ENCODE measurements at regions of chr5 and their contacts with region 1.

Region 1: GRCh38 chr5:54743997-54744788 is 226.6 kb downstream of the SNX18 start:
- DNase-seq: peak; percentile 96
- H3K4me3 ChIP-seq: 0 out of 2 replicates have a peak overlapping the region, but pooled peaks have one; percentile 3
- H3K27ac ChIP-seq: peak overlapping the region; percentile 99
- H3K27me3 ChIP-seq: no peaks in the 10 kb centered on the region
- CTCF ChIP-seq: no peak

Region 2: GRCh38 chr5:54761213-54761701 is 17.1 kb after region 1 on chr5:
- CTCF ChIA-PET with region 1: interaction called, 9 read pairs
- POLR2A ChIA-PET with region 1: interaction called, 27 read pairs
- DNase-seq: peak; percentile 82
- H3K4me3 ChIP-seq: no peak overlapping the region
- H3K27ac ChIP-seq: peak overlapping the region; percentile 94
- H3K27me3 ChIP-seq: no peaks in the 10 kb centered on the region
- CTCF ChIP-seq: no peak

Region 3: GRCh38 chr5:54835647-54836046 is 91.5 kb after region 1 on chr5:
- CTCF ChIA-PET with region 1: no interaction called
- POLR2A ChIA-PET with region 1: interaction called, 20 read pairs
- DNase-seq: peak; percentile 69
- H3K4me3 ChIP-seq: no peak overlapping the region
- H3K27ac ChIP-seq: peak overlapping the region; percentile 86
- H3K27me3 ChIP-seq: no peaks in the 10 kb centered on the region
- CTCF ChIP-seq: no peak

Region 4: GRCh38 chr5:54844905-54845566 is 100.8 kb after region 1 on chr5:
- CTCF ChIA-PET with region 1: interaction called, 10 read pairs
- POLR2A ChIA-PET with region 1: interaction called, 6 read pairs
- DNase-seq: peak; percentile 41
- H3K4me3 ChIP-seq: no peak overlapping the region
- H3K27ac ChIP-seq: no peak overlapping the region
- H3K27me3 ChIP-seq: no peaks in the 10 kb centered on the region
- CTCF ChIP-seq: peak; percentile 40

Measured in AG04450 (cell line).